ENCODE measurements at regions of chr19 and their contacts with region 1.

Region 1: GRCh38 chr19:48637170-48637947 is at the start of gene DBP:
- DNase-seq: peak; percentile 100
- ATAC-seq: peak; percentile 68
- H3K4me3 ChIP-seq: peak within 1 kb of the TSS; percentile 74 to 98 (median 88)
- H3K4me3 Mint-ChIP-seq: peak within 1 kb of the TSS; percentile 96
- H3K27ac ChIP-seq: peak within 1 kb of the TSS; percentile 89 to 94
- H3K27ac Mint-ChIP-seq: peak within 1 kb of the TSS; percentile 100
- H3K4me1 ChIP-seq: peaks cover 40 to 41% of the 10 kb centered on the region in 2 donors
- H3K4me1 Mint-ChIP-seq: peaks cover 55% of the 10 kb centered on the region
- H3K27me3 ChIP-seq: no peaks in the 10 kb centered on the region
- H3K27me3 Mint-ChIP-seq: no peaks in the 10 kb centered on the region
- CTCF ChIP-seq: no peak
- total RNA-seq, gene DBP: 33.0 and 33.2 TPM in 2 replicates

Region 2: GRCh38 chr19:48363810-48364563 is 273.4 kb before region 1 on chr19 and contains the starts of genes SYNGR4 and TMEM143:
- CTCF ChIA-PET with region 1: no interaction called
- POLR2A ChIA-PET with region 1: no interaction called
- intact Hi-C with region 1: loop called (anchors 2 kb)
- DNase-seq: peak; percentile 100
- ATAC-seq: peak; percentile 89
- H3K4me3 ChIP-seq: peak within 1 kb of the TSS; percentile 76 to 91 (median 85)
- H3K4me3 Mint-ChIP-seq: peak within 1 kb of the TSS; percentile 95
- H3K27ac ChIP-seq: peak within 1 kb of the TSS; percentile 93 to 97
- H3K27ac Mint-ChIP-seq: peak within 1 kb of the TSS; percentile 97
- H3K4me1 ChIP-seq: peaks cover 5 to 20% of the 10 kb centered on the region in 2 donors
- H3K4me1 Mint-ChIP-seq: peaks cover 15% of the 10 kb centered on the region
- H3K27me3 ChIP-seq: no peaks in the 10 kb centered on the region
- H3K27me3 Mint-ChIP-seq: no peaks in the 10 kb centered on the region
- CTCF ChIP-seq: no peak
- total RNA-seq, gene SYNGR4: not detected in 2 replicates
- total RNA-seq, gene TMEM143: 30.0 and 34.5 TPM in 2 replicates

Region 3: DNA sequence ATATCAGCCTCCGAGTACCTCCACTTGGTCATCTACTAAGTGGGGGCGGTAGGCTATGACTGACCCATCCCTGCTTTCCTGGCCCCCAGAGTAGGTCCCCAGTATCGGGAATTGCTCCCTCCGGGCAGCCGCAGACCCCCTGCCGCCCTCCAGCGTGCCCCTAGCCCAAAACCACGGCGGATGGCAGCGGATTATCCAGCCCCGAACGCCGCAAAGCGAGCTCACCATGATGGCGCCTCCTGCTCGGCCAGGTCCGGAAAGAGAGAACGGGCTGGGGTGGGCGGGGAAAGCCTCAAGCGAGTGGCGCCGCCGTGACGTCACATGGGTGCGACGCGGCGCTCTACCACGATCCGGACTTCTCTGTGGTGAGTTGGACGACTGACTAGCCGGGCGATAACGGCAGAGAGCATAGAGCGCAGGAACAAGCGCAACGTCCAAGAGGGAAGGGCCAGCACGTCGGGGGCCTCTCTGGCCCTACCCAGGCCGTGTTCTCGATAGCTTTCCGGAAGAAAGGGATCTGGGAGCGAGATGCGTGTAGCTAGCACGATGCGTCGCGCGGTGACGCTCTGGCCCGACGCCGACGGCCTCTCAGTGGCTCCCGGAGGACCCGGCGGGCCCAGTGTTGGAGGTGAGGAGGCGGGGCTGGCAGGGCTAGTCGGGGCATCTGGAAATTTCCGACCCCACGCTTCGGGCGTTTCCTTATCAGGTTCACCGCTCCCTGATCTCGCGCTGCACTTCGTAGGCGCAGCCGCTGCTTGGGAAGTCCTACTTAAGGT is 18.3 kb before region 1 on chr19 and contains the starts of genes RPL18 and SPHK2:
- CTCF ChIA-PET with region 1: interaction called, 6 read pairs
- POLR2A ChIA-PET with region 1: interaction called, 23 read pairs
- intact Hi-C with region 1: loop called (anchors 1 kb)
- DNase-seq: peak; percentile 99
- ATAC-seq: peak; percentile 82
- H3K4me3 ChIP-seq: peak within 1 kb of the TSS; percentile 95 to 100 (median 99)
- H3K4me3 Mint-ChIP-seq: peak within 1 kb of the TSS; percentile 98
- H3K27ac ChIP-seq: peak within 1 kb of the TSS; percentile 87 to 91
- H3K27ac Mint-ChIP-seq: peak within 1 kb of the TSS; percentile 98
- H3K4me1 ChIP-seq: peaks cover 25 to 45% of the 10 kb centered on the region in 2 donors
- H3K4me1 Mint-ChIP-seq: peaks cover 51% of the 10 kb centered on the region
- H3K27me3 ChIP-seq: no peaks in the 10 kb centered on the region
- H3K27me3 Mint-ChIP-seq: no peaks in the 10 kb centered on the region
- CTCF ChIP-seq: no peak
- total RNA-seq, gene RPL18: 2,217 and 2,248 TPM in 2 replicates
- total RNA-seq, gene SPHK2: 45.4 and 47.3 TPM in 2 replicates

Region 4: GRCh38 chr19:48795055-48795684 is 157.8 kb after region 1 on chr19:
- CTCF ChIA-PET with region 1: interaction called, 4 read pairs
- POLR2A ChIA-PET with region 1: no interaction called
- intact Hi-C with region 1: loop called (anchors 5 kb)
- DNase-seq: peak; percentile 93
- ATAC-seq: peak; percentile 98
- H3K4me3 ChIP-seq: peak overlapping the region; percentile 42 to 68 (median 60)
- H3K4me3 Mint-ChIP-seq: peak overlapping the region; percentile 98
- H3K27ac ChIP-seq: peak overlapping the region; percentile 30 to 62
- H3K27ac Mint-ChIP-seq: peak overlapping the region; percentile 93
- H3K4me1 ChIP-seq: peaks cover 3 to 10% of the 10 kb centered on the region in 2 donors
- H3K4me1 Mint-ChIP-seq: peaks cover 11% of the 10 kb centered on the region
- H3K27me3 ChIP-seq: no peaks in the 10 kb centered on the region
- H3K27me3 Mint-ChIP-seq: no peaks in the 10 kb centered on the region
- CTCF ChIP-seq: peak; percentile 96

Region 5: GRCh38 chr19:48954595-48955310 is 317.4 kb after region 1 on chr19 and contains the start of gene BAX:
- CTCF ChIA-PET with region 1: no interaction called
- POLR2A ChIA-PET with region 1: no interaction called
- intact Hi-C with region 1: loop called (anchors 5 kb)
- DNase-seq: peak; percentile 92
- ATAC-seq: peak; percentile 88
- H3K4me3 ChIP-seq: peak within 1 kb of the TSS; percentile 47 to 99 (median 87)
- H3K4me3 Mint-ChIP-seq: peak within 1 kb of the TSS; percentile 85
- H3K27ac ChIP-seq: peak within 1 kb of the TSS; percentile 84 to 89
- H3K27ac Mint-ChIP-seq: peak within 1 kb of the TSS; percentile 92
- H3K4me1 ChIP-seq: peaks cover 6 to 16% of the 10 kb centered on the region in 2 donors
- H3K4me1 Mint-ChIP-seq: peaks cover 20% of the 10 kb centered on the region
- H3K27me3 ChIP-seq: no peaks in the 10 kb centered on the region
- H3K27me3 Mint-ChIP-seq: no peaks in the 10 kb centered on the region
- CTCF ChIP-seq: no peak
- total RNA-seq, gene BAX: 92.7 and 95.3 TPM in 2 replicates

Region 6: DNA sequence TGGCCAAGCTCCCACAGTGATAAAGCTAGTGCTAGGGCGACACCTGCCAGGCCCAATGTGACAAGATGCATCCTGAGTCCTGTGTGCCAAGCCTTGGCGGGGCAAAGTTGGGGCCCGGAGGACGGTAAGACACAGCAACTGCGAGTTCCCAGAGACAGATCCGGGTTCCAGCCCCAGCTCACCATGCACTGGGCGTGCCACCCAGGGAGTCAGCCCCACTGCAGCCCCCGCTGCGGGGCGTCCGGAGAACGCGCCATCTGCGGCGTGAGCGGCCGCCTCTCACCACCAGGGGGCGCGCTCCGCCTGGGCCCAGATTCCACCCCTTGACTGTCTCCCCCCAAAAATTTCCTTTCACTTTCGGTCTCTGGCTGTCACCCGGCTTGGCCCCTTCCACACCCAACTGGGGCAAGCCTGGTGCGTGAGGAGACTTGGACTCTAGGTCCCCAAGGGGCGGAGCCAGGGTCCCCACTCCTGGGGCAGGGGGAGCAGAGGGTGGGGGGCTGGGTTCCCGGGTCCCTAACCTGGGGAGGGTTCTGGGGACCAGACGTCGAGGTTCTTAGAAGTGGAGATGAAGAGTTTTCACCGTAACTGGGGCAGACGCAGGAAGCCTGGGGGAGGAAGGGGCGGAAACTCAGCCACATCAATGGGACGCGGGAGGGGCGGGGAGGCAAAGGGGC is 836.6 kb after region 1 on chr19 and contains the start of gene FLT3LG:
- CTCF ChIA-PET with region 1: no interaction called
- POLR2A ChIA-PET with region 1: no interaction called
- intact Hi-C with region 1: loop called (anchors 10 kb)
- DNase-seq: peak; percentile 94
- ATAC-seq: peak; percentile 52
- H3K4me3 ChIP-seq: peak within 1 kb of the TSS in 4 of 5 experiments; percentile 53 to 98 (median 70)
- H3K4me3 Mint-ChIP-seq: peak within 1 kb of the TSS; percentile 93
- H3K27ac ChIP-seq: peak within 1 kb of the TSS; percentile 75 to 81
- H3K27ac Mint-ChIP-seq: peak within 1 kb of the TSS; percentile 97
- H3K4me1 ChIP-seq: peaks cover 43 to 73% of the 10 kb centered on the region in 2 donors
- H3K4me1 Mint-ChIP-seq: peaks cover 57% of the 10 kb centered on the region
- H3K27me3 ChIP-seq: no peaks in the 10 kb centered on the region
- H3K27me3 Mint-ChIP-seq: no peaks in the 10 kb centered on the region
- CTCF ChIP-seq: peak; percentile 89
- total RNA-seq, gene FLT3LG: 27.8 and 31.0 TPM in 2 replicates

Measured in B cell (primary cell).